ENCODE measurements at regions of chr7 and their contacts with region 1.

Region 1: DNA sequence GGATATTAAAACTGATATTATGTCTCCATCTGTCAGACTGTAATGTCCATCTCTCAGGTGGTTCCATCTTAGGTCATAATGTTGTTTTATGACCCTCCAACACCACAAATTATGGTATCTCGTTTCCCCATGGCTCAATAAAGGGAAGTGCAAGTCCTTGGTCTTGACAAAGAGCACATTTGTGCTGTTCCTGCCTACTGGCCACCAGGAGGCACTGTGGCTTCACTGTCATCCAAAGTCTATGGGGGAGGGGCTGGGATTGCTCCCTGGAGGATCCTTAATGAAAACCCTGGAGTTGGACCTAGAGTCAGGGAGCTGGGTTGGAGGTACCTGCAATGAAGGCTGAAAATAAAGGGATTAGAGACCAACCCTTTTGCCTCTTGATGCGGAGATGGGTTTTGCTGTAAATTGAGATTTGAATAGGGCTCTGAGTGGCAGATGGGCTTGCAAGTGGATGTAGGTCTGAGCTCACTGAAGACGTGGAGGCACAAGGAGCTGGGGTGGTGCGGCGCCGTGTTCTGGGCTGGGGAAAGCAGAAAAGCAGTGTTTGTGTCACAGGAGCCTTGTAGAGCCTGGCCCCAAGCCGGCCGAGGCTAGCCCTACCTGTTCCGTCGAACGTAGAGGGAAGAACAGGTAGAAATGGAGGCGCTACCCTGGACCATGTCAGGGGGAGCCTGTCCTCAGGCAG is 180.5 kb upstream of the PRSS58 start:
- DNase-seq: peak in 1 of 2 experiments; percentile 61
- H3K4me3 ChIP-seq: no peak overlapping the region
- H3K27ac ChIP-seq: no peak overlapping the region
- H3K4me1 ChIP-seq: peaks cover 0 to 10% (median 0%) of the 10 kb centered on the region in 4 experiments; a peak in 1 of 7 replicates
- H3K27me3 ChIP-seq: no peaks in the 10 kb centered on the region
- CTCF ChIP-seq: peak; percentile 95 to 99 (median 95)
- EP300 ChIP-seq: 0 out of 3 replicates have a peak, but pooled peaks of 1 of the 2 experiments have one; percentile 23
- POLR2A ChIP-seq: no peak
- RAD21 ChIP-seq: peak; percentile 70 to 83

Region 2: DNA sequence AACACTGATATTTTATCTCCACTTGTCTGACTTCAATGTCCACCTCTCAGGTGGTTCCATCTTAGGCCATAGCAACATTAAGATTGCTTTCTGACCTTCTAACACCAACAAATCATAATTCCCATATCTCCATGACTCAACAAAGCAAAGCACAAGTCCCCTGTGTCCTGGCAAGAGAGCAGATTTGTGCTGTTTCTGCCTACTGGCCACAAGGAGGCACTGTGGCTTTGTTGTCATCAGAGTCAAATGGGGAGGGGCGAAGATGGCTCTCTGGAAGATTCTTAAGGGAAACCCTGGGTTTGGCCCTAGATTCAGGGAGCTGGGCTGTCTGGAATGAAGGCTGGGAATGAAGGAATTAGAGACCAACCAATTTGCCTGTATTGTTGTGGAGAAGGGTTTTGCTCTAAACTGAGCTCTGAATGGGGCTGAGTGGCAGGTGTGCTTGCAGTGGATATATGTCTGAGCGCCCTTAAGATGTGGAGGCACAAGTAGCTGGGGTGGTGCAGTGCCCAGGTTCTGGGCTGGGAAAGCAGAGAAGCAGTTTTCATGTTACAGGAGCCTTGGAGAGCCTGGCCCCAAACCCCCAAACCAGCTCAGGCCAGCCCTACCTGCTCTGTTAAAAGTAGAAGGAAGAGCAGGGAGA is 25.7 kb before region 1 on chr7:
- CTCF ChIA-PET with region 1: interaction called, 35 read pairs
- POLR2A ChIA-PET with region 1: no interaction called
- DNase-seq: peak; percentile 36 to 55
- H3K4me3 ChIP-seq: no peak overlapping the region
- H3K27ac ChIP-seq: no peak overlapping the region
- H3K4me1 ChIP-seq: peaks cover 0 to 3% (median 0%) of the 10 kb centered on the region in 4 experiments; a peak in 2 of 7 replicates
- H3K27me3 ChIP-seq: no peaks in the 10 kb centered on the region
- CTCF ChIP-seq: peak; percentile 78 to 96 (median 84)
- EP300 ChIP-seq: no peak
- POLR2A ChIP-seq: no peak
- RAD21 ChIP-seq: peak; percentile 56 to 70

Region 3: DNA sequence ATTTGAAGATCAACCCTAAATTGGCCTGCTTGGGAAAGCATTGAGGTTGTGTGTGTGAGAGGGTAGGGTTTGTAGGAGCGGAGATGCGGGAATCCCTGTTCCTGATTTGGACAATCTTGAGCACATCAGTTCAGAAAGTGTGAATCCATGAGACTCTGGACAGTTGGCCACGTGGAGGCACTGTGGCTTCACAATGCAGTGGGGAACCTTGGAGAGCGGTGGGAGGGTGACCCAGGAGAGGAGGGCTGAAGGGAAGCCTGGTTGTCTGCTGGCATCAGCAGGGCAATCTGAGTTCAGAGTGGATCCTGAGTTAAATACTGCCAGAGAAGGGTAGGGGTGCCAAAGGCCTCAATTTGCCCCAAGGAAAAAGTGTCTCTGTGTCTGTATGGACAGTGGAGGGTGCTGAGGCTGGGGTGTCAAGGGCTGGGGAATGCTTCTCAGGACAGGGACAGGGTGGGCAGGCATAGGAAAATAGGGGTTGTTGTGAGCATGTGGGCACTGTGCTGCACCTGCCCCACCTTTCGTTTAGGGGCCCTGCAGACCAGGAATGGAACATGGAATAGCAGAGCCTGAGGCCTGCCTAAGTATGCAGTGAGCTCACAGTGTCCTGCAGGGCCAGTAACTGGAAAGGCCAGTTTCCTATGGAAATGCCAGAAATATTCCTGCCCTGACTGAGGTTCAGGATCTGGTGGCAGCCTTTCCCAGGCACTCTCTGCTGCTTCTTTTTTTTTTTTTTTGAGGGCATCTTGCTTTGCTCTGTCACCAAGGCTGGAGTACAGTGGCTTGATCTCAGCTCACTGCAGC is 17.6 kb before region 1 on chr7:
- CTCF ChIA-PET with region 1: interaction called, 35 read pairs
- POLR2A ChIA-PET with region 1: no interaction called
- DNase-seq: no peak
- H3K4me3 ChIP-seq: no peak overlapping the region
- H3K27ac ChIP-seq: no peak overlapping the region
- H3K4me1 ChIP-seq: peaks cover 0 to 5% (median 1%) of the 10 kb centered on the region in 4 experiments; a peak in 2 of 7 replicates
- H3K27me3 ChIP-seq: no peaks in the 10 kb centered on the region
- CTCF ChIP-seq: peak; percentile 28 to 52 (median 35)
- EP300 ChIP-seq: no peak
- POLR2A ChIP-seq: no peak
- RAD21 ChIP-seq: peak; percentile 56 to 62

Region 4: GRCh38 chr7:142428094-142428493 is 10.3 kb before region 1 on chr7:
- CTCF ChIA-PET with region 1: interaction called, 27 read pairs
- POLR2A ChIA-PET with region 1: no interaction called
- DNase-seq: no peak
- H3K4me3 ChIP-seq: no peak overlapping the region
- H3K27ac ChIP-seq: no peak overlapping the region
- H3K4me1 ChIP-seq: no peaks in the 10 kb centered on the region
- H3K27me3 ChIP-seq: no peaks in the 10 kb centered on the region
- CTCF ChIP-seq: no peak
- EP300 ChIP-seq: no peak
- POLR2A ChIP-seq: no peak
- RAD21 ChIP-seq: no peak

Region 5: DNA sequence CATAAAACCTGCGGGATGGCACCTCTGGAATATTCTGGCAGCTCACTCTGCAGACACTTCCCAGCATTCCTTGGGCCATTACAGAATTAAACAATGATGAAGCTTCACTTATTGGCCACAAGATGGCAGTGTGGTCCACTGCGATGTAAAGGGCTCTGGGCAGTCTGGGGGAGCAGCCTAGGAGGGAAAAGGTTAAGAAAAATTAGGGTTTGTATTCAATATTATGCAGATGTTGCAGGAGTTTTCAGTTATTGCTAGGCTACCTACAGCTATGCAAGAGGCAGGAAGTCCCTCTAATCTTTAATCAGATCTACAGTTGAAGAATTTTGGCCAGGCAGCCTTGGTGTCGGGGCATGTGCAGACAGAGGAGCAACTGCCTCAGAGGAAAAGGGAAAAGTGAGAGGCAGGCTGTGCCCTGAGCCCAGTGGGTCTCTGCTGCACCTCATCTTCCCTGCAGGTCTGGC is 77.7 kb after region 1 on chr7:
- CTCF ChIA-PET with region 1: interaction called, 22 read pairs
- POLR2A ChIA-PET with region 1: no interaction called
- DNase-seq: peak in 1 of 2 experiments; percentile 56
- H3K4me3 ChIP-seq: no peak overlapping the region
- H3K27ac ChIP-seq: no peak overlapping the region
- H3K4me1 ChIP-seq: peaks cover 0 to 3% (median 0%) of the 10 kb centered on the region in 4 experiments; a peak in 1 of 7 replicates
- H3K27me3 ChIP-seq: no peaks in the 10 kb centered on the region
- CTCF ChIP-seq: peak; percentile 53 to 81 (median 75)
- EP300 ChIP-seq: no peak
- POLR2A ChIP-seq: no peak
- RAD21 ChIP-seq: peak; percentile 61 to 67